Right ventricle myocardium superior (tissue), 1 donor: ENCODE measurements at regions of chr2 and their contacts with region 1.

Region 1: GRCh38 chr2:68925295-68925896 is 27.3 kb downstream of the GKN2 start:
- DNase-seq: no peak
- ATAC-seq: peak; percentile 70

Region 2: DNA sequence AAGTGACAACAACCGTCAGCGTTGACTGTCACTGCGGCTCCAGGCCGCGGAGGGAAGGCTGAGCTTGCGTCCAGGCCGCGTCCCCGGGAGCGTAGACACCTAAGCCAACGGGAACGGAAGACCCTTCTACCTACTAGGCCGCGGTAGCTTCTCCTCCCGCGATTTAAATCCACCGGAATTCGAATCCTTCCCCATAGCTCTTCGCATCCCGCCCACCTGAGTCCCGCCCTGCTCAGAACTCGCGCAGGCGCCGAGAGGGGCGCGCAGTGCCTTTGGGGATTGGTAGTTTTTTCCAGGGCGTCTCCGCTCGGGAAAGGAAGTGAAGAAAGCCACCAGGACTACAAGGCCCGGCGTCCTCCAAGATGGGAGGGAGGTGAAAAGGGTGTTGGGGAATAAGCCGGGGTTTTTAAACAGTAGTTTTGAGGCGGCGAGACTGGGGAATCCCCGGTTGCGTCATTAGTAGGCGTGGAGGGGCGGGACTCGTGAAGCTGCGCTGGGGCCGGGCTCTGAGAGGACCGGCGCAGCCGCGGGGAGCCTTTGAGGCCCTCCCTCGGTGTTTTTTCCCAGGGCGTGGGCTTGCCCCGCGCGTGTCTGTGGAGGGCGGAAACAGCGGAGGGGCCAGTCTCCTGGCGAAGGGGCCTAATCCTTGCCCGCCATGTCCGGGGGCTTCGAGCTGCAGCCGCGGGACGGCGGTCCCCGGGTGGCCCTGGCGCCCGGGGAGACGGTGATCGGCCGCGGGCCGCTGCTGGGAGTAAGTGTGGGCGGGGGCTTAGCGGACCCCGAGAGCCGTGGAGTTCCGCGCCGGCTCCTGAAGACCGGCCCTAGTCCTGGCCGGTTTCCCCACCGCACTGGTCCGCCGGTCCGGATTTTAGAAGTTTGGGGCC is 458.1 kb before region 1 on chr2 and contains the starts of genes APLF and FBXO48:
- intact Hi-C with region 1: loop called (anchors 10 kb)
- DNase-seq: peak; percentile 98
- ATAC-seq: peak; percentile 98
- total RNA-seq, gene APLF: 4.0 TPM
- total RNA-seq, gene FBXO48: 1.1 TPM

Region 3: GRCh38 chr2:68487773-68488355 is 437.5 kb before region 1 on chr2:
- intact Hi-C with region 1: loop called (anchors 10 kb)
- DNase-seq: no peak
- ATAC-seq: no peak

Region 4: DNA sequence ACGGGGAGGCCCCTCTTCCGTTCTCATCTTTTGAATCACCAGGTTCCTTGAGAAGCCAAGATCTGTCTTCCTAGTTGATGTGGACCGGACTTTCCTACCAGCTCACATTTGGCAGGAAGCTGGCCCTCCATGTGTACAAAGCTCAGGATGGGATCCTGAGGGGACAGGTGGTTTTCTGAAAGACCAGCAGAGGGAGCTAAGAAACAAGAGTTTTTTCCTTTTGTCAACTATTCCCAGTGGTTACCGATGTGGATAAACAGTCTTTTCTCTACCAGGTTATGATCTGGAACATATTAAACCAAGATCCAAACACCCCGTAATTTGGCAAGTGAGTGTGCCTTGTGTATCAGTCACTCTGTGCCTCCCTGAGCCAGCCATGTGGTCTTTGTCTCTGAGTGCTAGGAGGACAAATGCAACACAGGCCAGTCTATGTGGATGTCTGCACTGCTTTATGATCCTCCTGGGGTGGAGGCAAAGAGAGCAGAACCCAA is 215.9 kb before region 1 on chr2:
- intact Hi-C with region 1: loop called (anchors 5 kb)
- DNase-seq: no peak
- ATAC-seq: peak; percentile 69

Region 5: DNA sequence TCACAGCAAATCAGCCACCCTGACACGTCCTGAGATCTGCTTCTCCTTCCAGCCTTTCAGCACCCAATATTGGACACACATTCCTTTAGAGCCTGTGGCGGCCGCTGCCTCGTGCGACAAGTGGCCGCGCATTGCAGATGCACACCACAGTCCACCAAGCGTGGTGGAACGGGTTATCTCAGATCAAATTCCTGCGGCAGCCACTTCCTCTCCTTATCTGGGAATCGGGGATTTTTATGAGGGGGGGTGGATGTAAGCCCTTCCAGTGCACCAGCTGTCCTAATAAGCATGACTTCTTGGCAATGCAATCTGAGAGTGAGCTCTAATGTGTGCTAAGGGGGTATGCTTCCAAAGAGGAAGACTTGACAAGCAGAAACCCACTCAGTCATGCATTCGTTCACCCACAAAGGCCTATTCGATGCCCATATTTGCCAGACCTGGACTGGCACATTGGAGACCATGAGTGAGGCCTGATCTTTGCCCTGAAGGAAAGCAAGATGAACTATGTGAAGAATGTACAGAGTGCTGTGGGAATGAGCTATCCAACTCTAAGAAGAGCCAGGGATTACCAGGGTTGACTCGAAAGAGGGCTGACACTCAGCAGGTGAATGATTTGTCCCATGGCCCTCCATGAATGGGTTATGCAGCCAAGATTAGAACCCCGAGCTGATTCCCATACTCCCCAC is 35.8 kb before region 1 on chr2:
- intact Hi-C with region 1: no loop called
- DNase-seq: no peak
- ATAC-seq: no peak

Region 6: GRCh38 chr2:69073928-69074570 is 148.7 kb after region 1 on chr2:
- intact Hi-C with region 1: no loop called
- DNase-seq: no peak
- ATAC-seq: no peak